Activated CD4-positive, alpha-beta T cell treated with anti-CD3 and anti-CD28 coated beads, Interleukin-2, amount 10 ng/mL, durations not matched to agents 24 days and 14 days (primary cell): ENCODE measurements at regions of chr11 and their contacts with region 1.

Region 1: DNA sequence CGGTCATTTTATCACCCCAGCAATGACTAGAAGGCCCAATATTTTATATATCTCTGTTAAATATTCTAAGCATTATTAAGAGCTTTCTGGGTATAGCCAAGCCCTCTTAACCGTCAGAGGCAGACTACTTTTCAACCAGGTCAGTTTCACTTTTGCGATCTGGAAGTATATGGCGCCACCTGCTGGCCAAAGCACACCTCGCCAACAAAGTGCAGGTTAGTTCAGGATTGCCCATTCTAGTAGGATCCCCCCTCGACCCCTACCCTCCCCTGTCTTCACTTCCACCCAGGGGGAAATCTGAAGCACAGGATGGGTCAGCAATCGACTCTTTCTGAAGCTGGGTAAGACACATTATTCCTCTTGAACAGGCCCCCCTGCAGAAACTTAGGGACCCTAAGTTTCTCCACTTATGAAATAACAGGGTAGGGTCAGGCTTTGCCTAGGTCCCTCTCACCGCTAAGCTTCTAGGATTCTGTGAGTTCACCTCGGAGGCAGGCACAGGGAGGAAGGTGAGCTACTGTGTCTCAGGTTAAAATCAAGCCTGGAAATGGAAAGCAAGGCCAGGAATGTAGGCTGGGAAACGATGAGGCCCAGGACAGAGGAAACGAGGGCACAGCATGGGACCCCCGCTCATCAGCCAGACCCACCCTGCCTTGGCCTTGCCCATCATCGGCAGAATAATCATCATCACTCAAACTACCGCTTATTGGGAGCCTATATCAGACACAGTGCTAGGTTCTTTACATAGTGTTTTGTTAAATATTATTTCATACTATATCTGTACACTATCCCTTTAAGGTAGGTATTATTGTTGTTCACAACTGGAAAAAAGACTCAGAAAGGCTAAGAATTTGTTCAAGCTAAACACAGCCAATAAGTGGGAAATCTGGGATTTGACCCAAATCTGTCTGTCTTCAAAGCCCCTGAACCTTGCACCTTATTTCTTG is 35.6 kb downstream of the KCNJ1 start:
- DNase-seq: peak; percentile 95
- H3K4me3 Mint-ChIP-seq: peak overlapping the region; percentile 53
- H3K27ac Mint-ChIP-seq: no peak overlapping the region
- H3K4me1 Mint-ChIP-seq: peaks cover 22% of the 10 kb centered on the region
- H3K27me3 Mint-ChIP-seq: no peaks in the 10 kb centered on the region

Region 2: DNA sequence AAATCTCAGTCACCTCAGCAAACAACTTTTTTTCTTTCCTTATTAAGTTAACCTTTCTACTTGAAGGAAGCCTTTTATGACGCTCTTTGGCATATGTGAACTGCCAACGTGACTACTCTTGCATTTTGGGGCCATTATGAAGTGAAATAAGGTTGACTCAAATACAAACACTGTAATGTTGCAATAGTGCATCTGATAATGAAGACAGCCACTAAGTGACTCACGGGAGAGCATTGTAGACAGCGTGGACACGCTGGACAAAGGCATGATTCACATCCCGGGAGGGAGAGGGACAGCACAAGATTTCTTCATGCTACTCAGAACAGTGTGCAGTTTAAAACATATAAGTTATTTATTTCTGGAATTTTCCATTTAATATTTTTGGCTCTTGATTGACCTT is 804.9 kb before region 1 on chr11:
- intact Hi-C with region 1: loop called (anchors 2 kb)
- DNase-seq: no peak
- H3K4me3 Mint-ChIP-seq: no peak overlapping the region
- H3K27ac Mint-ChIP-seq: no peak overlapping the region
- H3K4me1 Mint-ChIP-seq: peaks cover 9% of the 10 kb centered on the region
- H3K27me3 Mint-ChIP-seq: peaks cover 37% of the 10 kb centered on the region

Region 3: GRCh38 chr11:128157423-128158298 is 673.8 kb before region 1 on chr11:
- intact Hi-C with region 1: loop called (anchors 2 kb)
- DNase-seq: peak; percentile 90
- H3K4me3 Mint-ChIP-seq: peak overlapping the region; percentile 63
- H3K27ac Mint-ChIP-seq: peak overlapping the region; percentile 78
- H3K4me1 Mint-ChIP-seq: peaks cover 10% of the 10 kb centered on the region
- H3K27me3 Mint-ChIP-seq: peaks cover 3% of the 10 kb centered on the region

Region 4: GRCh38 chr11:128172046-128172878 is 659.2 kb before region 1 on chr11:
- intact Hi-C with region 1: loop called (anchors 1 kb)
- DNase-seq: peak; percentile 95
- H3K4me3 Mint-ChIP-seq: no peak overlapping the region
- H3K27ac Mint-ChIP-seq: peak overlapping the region; percentile 56
- H3K4me1 Mint-ChIP-seq: peaks cover 25% of the 10 kb centered on the region
- H3K27me3 Mint-ChIP-seq: peaks cover 13% of the 10 kb centered on the region

Region 5: GRCh38 chr11:128465946-128466705 is 365.3 kb before region 1 on chr11:
- intact Hi-C with region 1: loop called (anchors 2 kb)
- DNase-seq: no peak
- H3K4me3 Mint-ChIP-seq: peak overlapping the region; percentile 81
- H3K27ac Mint-ChIP-seq: peak overlapping the region; percentile 98
- H3K4me1 Mint-ChIP-seq: peaks cover 90% of the 10 kb centered on the region
- H3K27me3 Mint-ChIP-seq: no peaks in the 10 kb centered on the region

Region 6: DNA sequence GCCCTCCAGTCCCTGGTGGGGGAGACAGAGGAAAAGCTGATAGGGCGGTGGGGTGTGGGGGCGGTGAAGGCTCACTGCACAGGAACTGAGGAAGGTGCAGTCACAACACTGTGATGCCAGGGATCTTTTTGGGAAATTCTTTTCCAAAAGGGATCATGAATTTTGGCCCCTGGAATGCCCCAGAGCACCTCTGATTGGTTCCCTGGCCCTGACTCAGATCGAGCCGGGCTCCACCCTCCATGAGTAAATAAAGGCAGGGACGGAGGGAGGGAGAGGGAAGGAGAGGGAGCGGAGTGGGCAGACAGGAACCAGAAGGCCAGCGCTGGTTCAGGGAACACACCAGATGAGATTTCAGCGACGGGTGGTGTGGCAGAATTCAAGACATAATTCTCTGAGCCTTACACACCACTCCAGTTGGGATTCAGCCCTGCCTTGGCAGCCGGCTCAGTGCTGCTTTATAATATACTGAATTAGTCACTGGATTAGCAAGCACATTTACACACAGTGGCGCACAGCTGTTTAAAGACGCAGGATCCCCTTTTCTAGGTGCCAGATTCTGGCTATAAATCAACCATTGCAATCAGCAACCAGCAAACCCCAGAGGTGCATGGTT is 324.3 kb before region 1 on chr11:
- intact Hi-C with region 1: loop called (anchors 5 kb)
- DNase-seq: peak; percentile 78
- H3K4me3 Mint-ChIP-seq: peak overlapping the region; percentile 93
- H3K27ac Mint-ChIP-seq: peak overlapping the region; percentile 98
- H3K4me1 Mint-ChIP-seq: peaks cover 93% of the 10 kb centered on the region
- H3K27me3 Mint-ChIP-seq: no peaks in the 10 kb centered on the region

Region 7: DNA sequence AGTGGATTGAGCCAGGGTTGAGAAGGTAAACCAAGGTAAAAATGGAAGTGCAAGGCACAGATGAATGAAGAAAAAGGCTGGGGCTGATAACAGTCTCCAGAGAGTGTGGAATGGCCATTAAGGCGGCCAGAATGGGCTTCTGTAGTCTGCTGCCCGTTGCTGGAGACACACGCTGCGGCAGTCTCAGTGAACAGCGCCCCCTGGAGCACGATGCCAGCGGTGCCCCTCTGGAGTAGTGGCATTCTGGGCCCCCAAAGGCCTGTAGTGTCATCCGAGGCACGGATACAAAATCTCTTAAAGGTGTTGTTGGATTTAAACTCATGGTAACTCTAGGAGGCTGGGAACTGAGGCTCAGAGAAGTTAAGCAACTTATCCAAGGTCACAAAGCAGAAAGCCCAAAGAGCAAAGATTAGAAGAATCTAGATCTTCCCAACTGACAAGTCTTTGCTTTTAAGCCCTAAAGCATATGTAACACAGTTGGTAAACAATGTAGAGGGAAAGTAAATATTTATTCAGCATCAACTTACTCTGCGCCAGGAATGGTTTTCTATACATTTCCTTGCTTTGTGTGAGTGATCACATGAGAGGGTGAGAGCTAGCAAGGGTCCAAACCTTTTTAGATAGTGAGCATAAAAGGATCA is 17.5 kb after region 1 on chr11:
- intact Hi-C with region 1: loop called (anchors 2 kb)
- DNase-seq: peak; percentile 87
- H3K4me3 Mint-ChIP-seq: no peak overlapping the region
- H3K27ac Mint-ChIP-seq: no peak overlapping the region
- H3K4me1 Mint-ChIP-seq: peaks cover 16% of the 10 kb centered on the region
- H3K27me3 Mint-ChIP-seq: no peaks in the 10 kb centered on the region